Endothelial cell of umbilical vein (primary cell): ENCODE measurements at regions of chr9 and their contacts with region 1.

Region 1: GRCh38 chr9:69809304-69809863 is 11.2 kb upstream of the CFAP95 start:
- DNase-seq: peak; percentile 36
- H3K4me3 ChIP-seq: no peak overlapping the region
- H3K27ac ChIP-seq: no peak overlapping the region
- H3K4me1 ChIP-seq: no peaks in the 10 kb centered on the region
- H3K27me3 ChIP-seq: peaks cover 41 to 46% of the 10 kb centered on the region in 2 experiments
- CTCF ChIP-seq: peak; percentile 33 to 35
- POLR2A ChIP-seq: no peak

Region 2: GRCh38 chr9:69798744-69799143 is 10.6 kb before region 1 on chr9:
- CTCF ChIA-PET with region 1: interaction called, 11 read pairs
- POLR2A ChIA-PET with region 1: no interaction called
- dilution Hi-C with region 1: no loop called
- intact Hi-C with region 1: no loop called
- DNase-seq: no peak
- H3K4me3 ChIP-seq: no peak overlapping the region
- H3K27ac ChIP-seq: no peak overlapping the region
- H3K4me1 ChIP-seq: no peaks in the 10 kb centered on the region
- H3K27me3 ChIP-seq: peaks cover 23 to 35% of the 10 kb centered on the region in 2 experiments
- CTCF ChIP-seq: no peak
- POLR2A ChIP-seq: no peak

Region 3: GRCh38 chr9:69867081-69867814 is 57.9 kb after region 1 on chr9:
- CTCF ChIA-PET with region 1: interaction called, 10 read pairs
- POLR2A ChIA-PET with region 1: no interaction called
- dilution Hi-C with region 1: no loop called
- intact Hi-C with region 1: no loop called
- DNase-seq: peak; percentile 84
- H3K4me3 ChIP-seq: no peak overlapping the region
- H3K27ac ChIP-seq: no peak overlapping the region
- H3K4me1 ChIP-seq: peaks cover 19% of the 10 kb centered on the region
- H3K27me3 ChIP-seq: peaks cover 13 to 26% of the 10 kb centered on the region in 2 experiments
- CTCF ChIP-seq: no peak
- POLR2A ChIP-seq: peak; percentile 52

Region 4: GRCh38 chr9:69877854-69878514 is 68.6 kb after region 1 on chr9:
- CTCF ChIA-PET with region 1: interaction called, 9 read pairs
- POLR2A ChIA-PET with region 1: no interaction called
- dilution Hi-C with region 1: no loop called
- intact Hi-C with region 1: loop called (anchors 1 kb)
- DNase-seq: peak; percentile 53
- H3K4me3 ChIP-seq: no peak overlapping the region
- H3K27ac ChIP-seq: no peak overlapping the region
- H3K4me1 ChIP-seq: peaks cover 14% of the 10 kb centered on the region
- H3K27me3 ChIP-seq: peaks cover 3 to 9% of the 10 kb centered on the region in 2 experiments
- CTCF ChIP-seq: peak; percentile 27 to 30
- POLR2A ChIP-seq: no peak

Region 5: DNA sequence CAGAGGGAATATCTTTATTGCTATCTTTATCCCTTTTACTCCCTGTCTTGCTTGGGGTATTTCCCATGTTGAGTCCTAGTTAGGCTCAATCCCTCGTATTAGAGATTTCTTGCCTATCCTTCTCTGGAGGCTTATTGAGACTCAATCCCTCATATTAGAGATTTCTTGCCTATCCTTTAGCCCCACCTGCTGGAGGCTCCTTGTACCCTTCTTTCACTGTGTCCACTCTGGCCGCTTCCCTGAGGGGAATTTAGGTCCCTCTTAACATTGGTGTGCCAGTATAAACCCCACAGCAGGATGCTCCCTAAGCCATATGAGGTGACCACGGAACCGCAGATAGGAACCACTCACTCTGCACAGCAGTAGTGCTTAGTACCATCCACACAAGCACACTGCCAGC is 123.5 kb after region 1 on chr9:
- CTCF ChIA-PET with region 1: interaction called, 16 read pairs
- POLR2A ChIA-PET with region 1: no interaction called
- dilution Hi-C with region 1: no loop called
- intact Hi-C with region 1: loop called (anchors 1 kb)
- DNase-seq: peak; percentile 44
- H3K4me3 ChIP-seq: no peak overlapping the region
- H3K27ac ChIP-seq: no peak overlapping the region
- H3K4me1 ChIP-seq: no peaks in the 10 kb centered on the region
- H3K27me3 ChIP-seq: peaks cover 4% of the 10 kb centered on the region in 2 experiments
- CTCF ChIP-seq: peak; percentile 28 to 48
- POLR2A ChIP-seq: no peak